HepG2 (cell line): ENCODE measurements at regions of chr9 and their contacts with region 1.

Region 1: DNA sequence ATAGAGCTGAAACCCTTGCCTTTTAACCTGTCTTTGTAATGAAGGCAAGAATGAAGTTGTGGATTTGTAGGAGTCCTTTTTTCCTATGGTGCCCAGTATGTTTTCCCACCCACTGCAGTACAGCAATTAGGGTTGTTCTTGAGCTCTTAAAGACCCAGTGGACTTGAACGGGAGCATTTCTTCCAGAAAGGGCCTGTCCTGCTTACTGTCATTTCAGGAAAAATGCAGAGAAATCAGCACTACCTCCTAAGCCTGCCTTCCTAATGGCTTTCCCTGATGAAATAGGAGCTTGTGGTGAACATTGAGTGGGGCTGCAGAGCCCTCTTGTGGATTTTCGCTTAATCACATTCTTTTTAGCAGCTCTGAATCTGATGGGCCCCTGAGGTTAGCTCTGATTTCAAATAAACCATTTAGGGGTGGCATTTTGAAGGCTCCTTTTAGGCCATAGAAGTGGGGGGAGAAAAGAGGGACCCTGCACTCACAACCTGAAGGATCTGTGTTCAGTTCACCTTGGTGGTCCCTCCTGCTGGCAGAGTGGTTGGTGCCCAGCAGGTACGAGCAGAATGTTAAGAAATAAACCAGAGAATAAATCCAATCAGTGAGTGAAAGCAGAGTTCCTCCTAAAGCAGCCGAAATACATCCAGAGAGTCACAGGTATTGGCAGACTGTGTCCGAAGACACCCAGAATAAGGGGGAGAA is 188.0 kb upstream of the KLF9 start:
- DNase-seq: peak; percentile 64
- ATAC-seq: peak; percentile 92
- H3K4me3 ChIP-seq: no peak overlapping the region
- H3K27ac ChIP-seq: no peak overlapping the region
- H3K4me1 ChIP-seq: peaks cover 9% of the 10 kb centered on the region; the same call in 1 of the 2 replicates
- H3K27me3 ChIP-seq: peaks cover 1 to 16% of the 10 kb centered on the region in 2 experiments; a peak in 4 of 5 replicates
- CTCF ChIP-seq: peak; percentile 85
- EP300 ChIP-seq: no peak
- POLR2A ChIP-seq: no peak
- RAD21 ChIP-seq: peak; percentile 80

Region 2: DNA sequence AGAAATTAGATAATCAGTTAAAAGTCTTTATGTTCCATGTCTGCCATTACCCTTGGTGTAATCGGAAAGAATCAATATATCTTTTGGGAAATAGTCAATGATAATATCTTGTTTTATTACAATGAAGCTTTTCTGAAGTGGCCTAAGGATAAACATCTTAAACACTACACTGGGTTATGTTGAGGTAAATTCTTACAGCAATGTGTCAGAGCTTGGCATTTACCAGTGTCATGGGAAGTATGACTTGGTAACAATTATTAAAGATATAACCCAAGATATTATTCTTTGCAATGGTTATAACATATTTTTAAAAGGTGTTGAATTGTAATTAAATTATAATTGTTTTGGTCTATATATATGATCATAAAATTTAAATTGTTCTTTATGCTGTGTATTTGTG is 697.2 kb before region 1 on chr9:
- CTCF ChIA-PET with region 1: no interaction called
- POLR2A ChIA-PET with region 1: no interaction called
- in situ Hi-C with region 1: no loop called
- intact Hi-C with region 1: no loop called
- DNase-seq: no peak
- ATAC-seq: no peak
- H3K4me3 ChIP-seq: no peak overlapping the region
- H3K27ac ChIP-seq: no peak overlapping the region
- H3K4me1 ChIP-seq: no peaks in the 10 kb centered on the region
- H3K27me3 ChIP-seq: no peaks in the 10 kb centered on the region
- CTCF ChIP-seq: no peak
- EP300 ChIP-seq: no peak
- POLR2A ChIP-seq: no peak
- RAD21 ChIP-seq: no peak

Region 3: DNA sequence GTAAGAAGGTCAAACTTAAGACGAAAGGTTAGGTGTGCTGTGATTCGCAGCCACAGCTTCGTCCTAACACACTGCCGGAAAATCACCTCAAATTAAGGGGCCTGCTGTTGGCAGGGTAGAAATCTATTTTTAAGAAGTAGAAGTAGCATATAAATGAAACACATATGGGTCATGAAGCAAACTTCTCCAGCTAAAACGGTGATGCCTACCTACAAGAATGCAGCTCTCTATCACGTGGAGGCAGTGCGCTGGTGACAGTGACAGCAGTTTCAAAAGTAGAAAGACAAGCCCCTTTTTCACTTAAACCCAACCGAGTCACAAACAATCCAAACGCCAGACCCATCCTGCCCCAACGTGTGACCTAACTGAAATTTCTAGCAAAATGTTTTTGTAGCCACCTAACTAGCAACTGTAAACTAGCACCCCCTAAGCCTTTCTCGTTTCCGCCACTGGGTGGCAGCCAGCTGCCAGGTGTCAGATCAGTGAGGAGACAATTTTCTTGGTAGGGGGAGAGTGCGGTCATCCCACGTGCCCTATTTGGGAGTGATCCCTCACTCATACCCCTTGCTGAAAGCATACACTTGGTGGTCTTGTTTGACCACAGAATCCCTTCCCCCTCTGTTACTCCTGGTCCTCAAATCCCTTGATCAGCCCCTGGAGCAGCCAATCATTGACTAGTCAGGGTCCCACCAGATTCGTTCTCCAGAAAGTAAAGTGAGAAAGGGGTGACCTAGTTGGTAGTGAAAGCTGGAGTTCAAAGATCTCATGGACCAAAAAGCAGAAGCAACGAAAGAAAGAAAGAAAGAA is 630.6 kb before region 1 on chr9:
- CTCF ChIA-PET with region 1: interaction called, 17 read pairs
- POLR2A ChIA-PET with region 1: no interaction called
- in situ Hi-C with region 1: loop called (anchors 5 kb)
- intact Hi-C with region 1: no loop called
- DNase-seq: peak; percentile 27
- ATAC-seq: peak; percentile 91
- H3K4me3 ChIP-seq: no peak overlapping the region
- H3K27ac ChIP-seq: no peak overlapping the region
- H3K4me1 ChIP-seq: no peaks in the 10 kb centered on the region
- H3K27me3 ChIP-seq: peaks cover 3 to 13% of the 10 kb centered on the region in 2 experiments; a peak in 2 of 5 replicates
- CTCF ChIP-seq: peak; percentile 90
- EP300 ChIP-seq: no peak
- POLR2A ChIP-seq: no peak
- RAD21 ChIP-seq: peak; percentile 65

Region 4: GRCh38 chr9:70340572-70340971 is 261.9 kb before region 1 on chr9:
- CTCF ChIA-PET with region 1: interaction called, 29 read pairs
- POLR2A ChIA-PET with region 1: no interaction called
- in situ Hi-C with region 1: loop called (anchors 5 kb)
- intact Hi-C with region 1: loop called (anchors 1 kb)
- DNase-seq: peak; percentile 3
- ATAC-seq: no peak
- H3K4me3 ChIP-seq: no peak overlapping the region
- H3K27ac ChIP-seq: no peak overlapping the region
- H3K4me1 ChIP-seq: no peaks in the 10 kb centered on the region
- H3K27me3 ChIP-seq: no peaks in the 10 kb centered on the region
- CTCF ChIP-seq: 0 out of 2 replicates have a peak, but pooled peaks have one; percentile 14
- EP300 ChIP-seq: no peak
- POLR2A ChIP-seq: no peak
- RAD21 ChIP-seq: no peak

Region 5: GRCh38 chr9:70419546-70420266 is 182.8 kb before region 1 on chr9:
- CTCF ChIA-PET with region 1: no interaction called
- POLR2A ChIA-PET with region 1: no interaction called
- in situ Hi-C with region 1: no loop called
- intact Hi-C with region 1: loop called (anchors 2 kb)
- DNase-seq: peak; percentile 91
- ATAC-seq: peak; percentile 61
- H3K4me3 ChIP-seq: peak overlapping the region; percentile 61 to 84 (median 67)
- H3K27ac ChIP-seq: peak overlapping the region; percentile 100
- H3K4me1 ChIP-seq: peaks cover 39% of the 10 kb centered on the region
- H3K27me3 ChIP-seq: peaks cover 0 to 4% of the 10 kb centered on the region in 2 experiments; a peak in 2 of 5 replicates
- CTCF ChIP-seq: 0 out of 2 replicates have a peak, but pooled peaks have one; percentile 6
- EP300 ChIP-seq: peak; percentile 22 to 78; a peak in 3 of 4 replicates
- POLR2A ChIP-seq: peak in 1 of 2 experiments; percentile 97; a peak in 2 of 4 replicates
- RAD21 ChIP-seq: 0 out of 2 replicates have a peak, but pooled peaks have one; percentile 10